Activated CD4-positive, alpha-beta memory T cell treated with anti-CD3 and anti-CD28 coated beads for 36 hours (primary cell): ENCODE measurements at regions of chr4 and their contacts with region 1.

Region 1: DNA sequence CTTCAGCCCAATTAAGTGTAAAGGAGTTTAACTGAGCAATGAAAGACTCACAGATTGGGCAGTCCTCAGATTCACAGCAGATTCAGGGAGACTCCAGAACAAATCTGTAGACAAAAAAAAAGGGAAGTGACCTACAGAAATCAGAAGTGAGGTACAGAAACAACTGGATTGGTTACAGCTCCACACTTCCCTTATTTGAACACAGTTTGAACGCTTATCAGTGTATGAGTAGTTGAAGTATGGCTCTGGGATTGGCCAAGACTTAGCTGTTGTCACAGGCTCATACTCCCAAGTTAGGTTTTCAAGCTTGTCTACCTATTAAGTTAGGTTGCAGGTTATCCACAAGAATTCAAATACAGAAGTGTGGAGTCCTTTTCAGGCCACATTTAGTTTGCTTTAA is 112.4 kb upstream of the ELOVL6 start:
- DNase-seq: no peak
- H3K4me3 Mint-ChIP-seq: no peak overlapping the region
- H3K27ac Mint-ChIP-seq: no peak overlapping the region
- H3K4me1 Mint-ChIP-seq: no peaks in the 10 kb centered on the region
- H3K27me3 Mint-ChIP-seq: peaks cover 6% of the 10 kb centered on the region

Region 2: DNA sequence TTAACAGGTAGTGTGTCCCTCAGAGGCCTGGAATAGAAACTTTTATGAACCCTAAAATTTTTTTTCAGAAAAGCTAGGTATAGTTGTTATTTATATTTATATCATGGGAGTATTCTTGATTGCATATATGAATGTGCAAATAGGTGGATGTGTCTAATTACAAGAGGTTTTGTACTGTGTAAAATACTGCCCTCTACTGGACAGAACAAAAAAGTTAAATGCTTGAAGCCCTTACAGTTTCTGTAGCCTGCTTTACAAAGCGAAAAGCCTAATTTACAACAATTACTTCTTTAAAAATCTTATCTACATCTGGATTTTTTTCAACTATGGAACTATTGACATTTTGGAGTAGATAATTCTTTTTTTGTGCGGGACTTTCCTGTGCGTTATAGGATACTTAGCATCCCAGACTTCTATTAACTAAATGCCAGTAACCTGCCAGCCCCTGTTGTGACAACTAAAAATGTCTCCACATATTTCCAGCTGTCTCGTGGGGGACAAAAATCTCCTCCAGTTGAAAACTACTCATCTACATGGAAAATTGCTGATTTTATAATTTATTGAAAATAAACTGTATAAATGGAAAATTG is 200.3 kb after region 1 on chr4:
- CTCF ChIA-PET with region 1: interaction called, 38 read pairs
- POLR2A ChIA-PET with region 1: no interaction called
- intact Hi-C with region 1: loop called (anchors 1 kb)
- DNase-seq: no peak
- H3K4me3 Mint-ChIP-seq: no peak overlapping the region
- H3K27ac Mint-ChIP-seq: no peak overlapping the region
- H3K4me1 Mint-ChIP-seq: peaks cover 9% of the 10 kb centered on the region
- H3K27me3 Mint-ChIP-seq: no peaks in the 10 kb centered on the region